Endothelial cell of umbilical vein (primary cell): ENCODE measurements at regions of chr9 and their contacts with region 1.

Region 1: GRCh38 chr9:127916665-127917613 is at the start of gene ST6GALNAC4:
- DNase-seq: peak; percentile 89
- H3K4me3 ChIP-seq: peak within 1 kb of the TSS; percentile 59 to 77 (median 71)
- H3K27ac ChIP-seq: peak within 1 kb of the TSS; percentile 55
- H3K4me1 ChIP-seq: peaks cover 39% of the 10 kb centered on the region
- H3K27me3 ChIP-seq: no peaks in the 10 kb centered on the region
- CTCF ChIP-seq: no peak
- POLR2A ChIP-seq: peak; percentile 82
- total RNA-seq, gene ST6GALNAC4: 38.1 and 45.9 TPM in 2 replicates

Region 2: GRCh38 chr9:126927419-126927818 is 989.5 kb before region 1 on chr9:
- CTCF ChIA-PET with region 1: no interaction called
- POLR2A ChIA-PET with region 1: no interaction called
- dilution Hi-C with region 1: no loop called
- intact Hi-C with region 1: no loop called
- DNase-seq: no peak
- H3K4me3 ChIP-seq: no peak overlapping the region
- H3K27ac ChIP-seq: no peak overlapping the region
- H3K4me1 ChIP-seq: no peaks in the 10 kb centered on the region
- H3K27me3 ChIP-seq: peaks cover 13 to 17% of the 10 kb centered on the region in 2 experiments
- CTCF ChIP-seq: no peak
- POLR2A ChIP-seq: no peak

Region 3: GRCh38 chr9:127503947-127504782 is 412.8 kb before region 1 on chr9:
- CTCF ChIA-PET with region 1: interaction called, 3 read pairs
- POLR2A ChIA-PET with region 1: no interaction called
- dilution Hi-C with region 1: no loop called
- intact Hi-C with region 1: loop called (anchors 5 kb)
- DNase-seq: peak; percentile 75
- H3K4me3 ChIP-seq: no peak overlapping the region
- H3K27ac ChIP-seq: no peak overlapping the region
- H3K4me1 ChIP-seq: no peaks in the 10 kb centered on the region
- H3K27me3 ChIP-seq: no peaks in the 10 kb centered on the region
- CTCF ChIP-seq: peak; percentile 86 to 98
- POLR2A ChIP-seq: no peak

Region 4: GRCh38 chr9:127525401-127526187 is 391.3 kb before region 1 on chr9:
- CTCF ChIA-PET with region 1: no interaction called
- POLR2A ChIA-PET with region 1: no interaction called
- dilution Hi-C with region 1: no loop called
- intact Hi-C with region 1: loop called (anchors 10 kb)
- DNase-seq: no peak
- H3K4me3 ChIP-seq: no peak overlapping the region
- H3K27ac ChIP-seq: no peak overlapping the region
- H3K4me1 ChIP-seq: peaks cover 51% of the 10 kb centered on the region
- H3K27me3 ChIP-seq: no peaks in the 10 kb centered on the region
- CTCF ChIP-seq: peak; percentile 53 to 55
- POLR2A ChIP-seq: no peak

Region 5: DNA sequence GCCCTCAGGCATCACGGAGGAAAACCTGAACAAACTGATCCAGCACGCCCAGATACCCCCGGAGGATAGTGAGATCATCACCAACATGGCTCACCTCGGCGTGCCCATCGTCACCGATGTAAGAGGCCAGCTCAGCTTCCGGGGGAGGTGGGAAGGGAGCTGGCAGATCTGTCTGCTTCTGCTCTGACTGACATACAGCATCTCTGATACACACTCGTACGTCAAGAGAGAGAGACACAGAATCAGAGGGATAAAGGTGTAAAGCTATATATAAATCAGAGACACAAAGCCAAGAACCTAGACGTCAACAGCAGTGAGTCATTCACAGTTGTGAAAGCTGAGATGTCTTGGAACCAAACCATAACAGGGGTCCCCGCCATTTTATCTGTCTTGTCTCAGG is 240.3 kb before region 1 on chr9:
- CTCF ChIA-PET with region 1: no interaction called
- POLR2A ChIA-PET with region 1: no interaction called
- dilution Hi-C with region 1: no loop called
- intact Hi-C with region 1: no loop called
- DNase-seq: no peak
- H3K4me3 ChIP-seq: no peak overlapping the region
- H3K27ac ChIP-seq: no peak overlapping the region
- H3K4me1 ChIP-seq: no peaks in the 10 kb centered on the region
- H3K27me3 ChIP-seq: no peaks in the 10 kb centered on the region
- CTCF ChIP-seq: no peak
- POLR2A ChIP-seq: no peak

Region 6: GRCh38 chr9:127715394-127716337 is 201.3 kb before region 1 on chr9 and contains the starts of genes PTRH1 and TTC16:
- CTCF ChIA-PET with region 1: no interaction called
- POLR2A ChIA-PET with region 1: no interaction called
- dilution Hi-C with region 1: no loop called
- intact Hi-C with region 1: no loop called
- DNase-seq: peak; percentile 95
- H3K4me3 ChIP-seq: peak within 1 kb of the TSS; percentile 67 to 88 (median 85)
- H3K27ac ChIP-seq: peak within 1 kb of the TSS; percentile 36
- H3K4me1 ChIP-seq: peaks cover 5% of the 10 kb centered on the region
- H3K27me3 ChIP-seq: no peaks in the 10 kb centered on the region
- CTCF ChIP-seq: no peak
- POLR2A ChIP-seq: no peak
- total RNA-seq, gene PTRH1: 19.6 and 25.1 TPM in 2 replicates
- total RNA-seq, gene TTC16: not detected in 2 replicates

Region 7: GRCh38 chr9:127802576-127803443 is 114.1 kb before region 1 on chr9 and contains the start of gene FPGS:
- CTCF ChIA-PET with region 1: interaction called, 6 read pairs
- POLR2A ChIA-PET with region 1: no interaction called
- dilution Hi-C with region 1: no loop called
- intact Hi-C with region 1: loop called (anchors 1 kb)
- DNase-seq: peak; percentile 86
- H3K4me3 ChIP-seq: peak within 1 kb of the TSS; percentile 71 to 80 (median 79)
- H3K27ac ChIP-seq: peak within 1 kb of the TSS; percentile 83
- H3K4me1 ChIP-seq: peaks cover 19% of the 10 kb centered on the region
- H3K27me3 ChIP-seq: no peaks in the 10 kb centered on the region
- CTCF ChIP-seq: peak in 1 of 2 donors; percentile 1
- POLR2A ChIP-seq: peak; percentile 69
- total RNA-seq, gene FPGS: 90.2 and 90.7 TPM in 2 replicates

Region 8: GRCh38 chr9:127877566-127877998 is 39.4 kb before region 1 on chr9 and contains the start of gene AK1:
- CTCF ChIA-PET with region 1: interaction called, 17 read pairs
- POLR2A ChIA-PET with region 1: interaction called, 3 read pairs
- dilution Hi-C with region 1: no loop called
- intact Hi-C with region 1: loop called (anchors 2 kb)
- DNase-seq: peak; percentile 63
- H3K4me3 ChIP-seq: peak within 1 kb of the TSS; percentile 23 to 55 (median 44)
- H3K27ac ChIP-seq: peak within 1 kb of the TSS; percentile 31
- H3K4me1 ChIP-seq: peaks cover 17% of the 10 kb centered on the region
- H3K27me3 ChIP-seq: no peaks in the 10 kb centered on the region
- CTCF ChIP-seq: no peak
- POLR2A ChIP-seq: peak; percentile 86
- total RNA-seq, gene AK1: 113 and 115 TPM in 2 replicates

Region 9: DNA sequence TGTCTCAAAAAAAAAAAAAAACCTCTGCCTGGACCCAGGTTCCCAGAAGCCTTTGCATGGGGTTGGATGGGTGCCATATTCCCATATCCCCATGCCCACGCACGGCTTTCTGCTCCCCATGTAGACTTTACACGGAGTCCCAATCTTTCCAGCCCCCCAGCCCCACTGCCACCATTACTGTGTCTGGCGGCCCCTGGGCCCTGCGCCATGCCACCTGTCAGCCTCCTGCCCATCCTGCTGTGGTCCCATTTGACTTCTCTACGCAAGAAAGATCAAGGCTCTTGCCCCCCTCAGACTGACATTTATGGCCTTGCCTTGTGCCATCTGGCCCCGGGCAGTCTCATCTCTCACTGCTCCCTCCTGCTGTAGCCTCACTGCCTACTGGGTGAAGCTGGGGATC is 33.0 kb before region 1 on chr9:
- CTCF ChIA-PET with region 1: interaction called, 17 read pairs
- POLR2A ChIA-PET with region 1: no interaction called
- dilution Hi-C with region 1: no loop called
- intact Hi-C with region 1: loop called (anchors 2 kb)
- DNase-seq: no peak
- H3K4me3 ChIP-seq: no peak overlapping the region
- H3K27ac ChIP-seq: no peak overlapping the region
- H3K4me1 ChIP-seq: peaks cover 8% of the 10 kb centered on the region
- H3K27me3 ChIP-seq: no peaks in the 10 kb centered on the region
- CTCF ChIP-seq: no peak
- POLR2A ChIP-seq: no peak

Region 10: DNA sequence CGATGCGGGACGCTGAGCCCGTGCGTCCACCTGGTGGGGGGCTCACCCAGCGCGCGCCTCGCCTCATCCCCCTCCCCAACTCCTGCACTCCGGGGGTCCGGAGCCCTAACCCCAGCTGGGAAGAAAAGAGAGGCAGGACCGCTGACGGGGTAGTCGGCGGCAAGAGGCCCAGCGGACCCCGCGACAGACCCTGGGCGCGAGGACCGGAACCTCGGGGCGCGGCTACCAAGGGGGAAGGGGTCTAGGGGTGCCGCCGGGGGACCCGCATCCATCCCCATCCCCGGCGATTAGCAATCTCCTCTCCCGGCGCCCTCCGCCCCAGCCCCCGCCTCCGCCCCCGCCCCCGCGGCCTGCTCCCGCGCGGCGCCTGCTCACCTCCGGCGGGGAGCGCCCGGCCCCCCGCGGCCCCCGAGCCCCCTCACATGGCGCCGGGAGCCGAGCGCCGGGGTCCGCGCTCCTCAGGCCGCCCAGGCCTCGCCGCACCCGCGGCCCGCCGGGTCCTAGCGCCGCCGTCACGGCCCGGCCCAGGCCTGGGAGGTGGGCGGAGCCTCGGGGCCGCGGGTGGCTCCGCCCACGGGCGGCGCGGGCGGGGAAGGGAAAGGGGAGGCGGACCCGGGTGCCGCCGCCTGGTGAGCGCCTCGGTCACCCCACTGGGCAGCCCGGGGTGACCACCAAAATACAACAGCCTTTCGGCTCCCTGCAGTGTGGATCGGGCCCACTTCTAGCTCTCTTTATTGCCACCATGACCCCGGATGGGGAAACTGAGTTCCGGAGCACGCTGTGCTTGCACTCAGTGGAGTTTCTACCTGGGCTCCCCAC is 17.6 kb before region 1 on chr9 and contains the start of gene ST6GALNAC6:
- CTCF ChIA-PET with region 1: interaction called, 6 read pairs
- POLR2A ChIA-PET with region 1: interaction called, 3 read pairs
- dilution Hi-C with region 1: no loop called
- intact Hi-C with region 1: loop called (anchors 2 kb)
- DNase-seq: peak; percentile 56
- H3K4me3 ChIP-seq: peak within 1 kb of the TSS; percentile 60 to 74 (median 62)
- H3K27ac ChIP-seq: peak within 1 kb of the TSS; percentile 35
- H3K4me1 ChIP-seq: peaks cover 25% of the 10 kb centered on the region
- H3K27me3 ChIP-seq: no peaks in the 10 kb centered on the region
- CTCF ChIP-seq: no peak
- POLR2A ChIP-seq: peak; percentile 57
- total RNA-seq, gene ST6GALNAC6: 43.0 and 43.5 TPM in 2 replicates

Region 11: GRCh38 chr9:127987103-127987614 is 70.2 kb after region 1 on chr9:
- CTCF ChIA-PET with region 1: no interaction called
- POLR2A ChIA-PET with region 1: no interaction called
- dilution Hi-C with region 1: no loop called
- intact Hi-C with region 1: no loop called
- DNase-seq: no peak
- H3K4me3 ChIP-seq: no peak overlapping the region
- H3K27ac ChIP-seq: no peak overlapping the region
- H3K4me1 ChIP-seq: no peaks in the 10 kb centered on the region
- H3K27me3 ChIP-seq: peaks cover 0 to 2% of the 10 kb centered on the region in 2 experiments
- CTCF ChIP-seq: no peak
- POLR2A ChIP-seq: no peak